Activated CD4-positive, alpha-beta T cell treated with anti-CD3 and anti-CD28 coated beads, Interleukin-2, amount 10 ng/mL, durations not matched to agents 24 days and 14 days (primary cell): ENCODE measurements at regions of chr12 and their contacts with region 1.

Region 1: DNA sequence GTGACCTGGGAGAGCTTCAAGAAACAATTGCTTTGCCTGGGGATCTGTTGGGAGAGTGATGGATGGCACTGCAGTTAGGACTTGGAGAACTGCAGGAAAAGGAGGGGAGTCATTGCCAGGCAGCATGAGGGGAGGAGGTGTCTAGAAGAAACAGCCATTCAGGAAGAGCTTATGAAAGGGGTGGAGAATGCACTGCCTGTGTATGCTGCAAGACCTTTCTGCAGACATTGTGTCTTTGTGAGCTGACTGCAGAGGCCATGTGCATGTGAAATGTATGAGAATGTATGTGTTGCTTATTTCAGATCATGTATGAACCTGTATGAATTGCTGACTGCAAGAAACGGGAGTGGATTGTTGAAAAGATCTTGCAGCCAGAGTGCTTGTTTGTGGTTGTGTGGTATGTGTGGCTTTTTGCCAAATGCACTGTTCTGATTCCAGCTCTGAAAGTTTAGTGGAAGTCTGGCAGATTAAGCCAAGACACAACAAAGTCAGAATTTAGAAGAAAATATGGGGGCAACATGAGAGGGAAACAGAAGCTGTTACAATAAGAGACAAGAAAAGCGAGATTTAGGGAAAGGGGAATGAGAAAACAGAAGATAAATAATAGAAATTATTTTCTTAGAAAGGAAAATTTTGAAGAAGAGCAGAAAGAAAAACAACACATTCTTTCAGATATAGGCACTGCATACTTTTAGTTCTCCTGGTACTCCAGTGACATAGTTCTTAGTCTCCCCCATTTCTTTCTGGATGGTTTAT is 9.8 kb upstream of the RIMKLB start:
- DNase-seq: no peak
- H3K4me3 Mint-ChIP-seq: no peak overlapping the region
- H3K27ac Mint-ChIP-seq: no peak overlapping the region
- H3K4me1 Mint-ChIP-seq: no peaks in the 10 kb centered on the region
- H3K27me3 Mint-ChIP-seq: peaks cover 34% of the 10 kb centered on the region

Region 2: DNA sequence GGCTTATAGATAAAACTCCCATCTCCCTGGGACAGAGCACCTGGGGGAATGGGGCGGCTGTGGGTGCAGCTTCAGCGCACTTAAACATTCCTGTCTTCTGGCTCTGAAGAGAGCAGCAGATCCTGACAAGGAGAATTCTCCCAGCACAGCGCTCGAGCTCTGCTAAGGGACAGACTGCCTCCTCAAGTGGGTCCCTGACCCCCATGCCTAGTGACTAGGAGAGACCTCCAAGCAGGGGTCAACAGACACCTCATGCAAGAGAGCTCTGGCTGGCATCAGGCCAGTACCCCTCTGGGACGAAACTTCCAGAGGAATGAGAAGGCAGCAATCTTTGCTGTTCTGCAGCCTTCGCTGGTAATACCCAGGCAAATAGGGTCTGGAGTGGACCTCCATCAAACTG is 1216.0 kb before region 1 on chr12:
- intact Hi-C with region 1: no loop called
- DNase-seq: no peak
- H3K4me3 Mint-ChIP-seq: no peak overlapping the region
- H3K27ac Mint-ChIP-seq: no peak overlapping the region
- H3K4me1 Mint-ChIP-seq: no peaks in the 10 kb centered on the region
- H3K27me3 Mint-ChIP-seq: peaks cover 10% of the 10 kb centered on the region

Region 3: GRCh38 chr12:8722286-8722685 is 34.3 kb after region 1 on chr12:
- intact Hi-C with region 1: no loop called
- DNase-seq: no peak
- H3K4me3 Mint-ChIP-seq: no peak overlapping the region
- H3K27ac Mint-ChIP-seq: no peak overlapping the region
- H3K4me1 Mint-ChIP-seq: no peaks in the 10 kb centered on the region
- H3K27me3 Mint-ChIP-seq: no peaks in the 10 kb centered on the region

Region 4: GRCh38 chr12:8813572-8814357 is 125.7 kb after region 1 on chr12:
- intact Hi-C with region 1: no loop called
- DNase-seq: no peak
- H3K4me3 Mint-ChIP-seq: no peak overlapping the region
- H3K27ac Mint-ChIP-seq: no peak overlapping the region
- H3K4me1 Mint-ChIP-seq: no peaks in the 10 kb centered on the region
- H3K27me3 Mint-ChIP-seq: no peaks in the 10 kb centered on the region

Region 5: DNA sequence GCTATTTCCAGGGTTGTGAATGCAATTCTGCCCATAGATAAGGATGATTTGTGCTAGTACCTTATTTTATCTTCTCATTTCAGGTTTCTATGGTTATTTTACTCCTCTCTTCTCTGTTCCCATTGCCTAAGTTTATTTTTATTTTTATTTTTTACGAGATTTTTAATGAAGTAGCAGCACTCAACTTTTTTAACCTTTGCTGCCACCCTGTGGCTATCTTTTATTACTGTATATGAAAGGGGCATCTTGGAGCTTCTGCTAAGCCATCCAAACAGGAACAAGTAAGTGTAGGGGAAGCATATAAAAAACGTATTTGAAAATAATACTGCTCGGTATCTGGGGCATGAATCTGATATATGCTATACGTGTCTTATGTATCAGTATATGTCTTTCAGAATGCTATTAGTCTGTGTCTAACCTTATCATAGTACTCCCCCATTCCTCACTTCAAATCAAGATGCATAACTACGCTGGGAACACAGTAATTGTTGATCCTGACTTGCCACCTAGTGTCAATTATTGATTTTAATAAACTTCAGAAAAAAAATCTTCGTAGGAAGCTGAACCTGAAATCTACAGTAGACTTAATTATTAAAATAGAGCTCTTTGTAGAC is 361.6 kb after region 1 on chr12:
- intact Hi-C with region 1: loop called (anchors 2 kb)
- DNase-seq: peak; percentile 78
- H3K4me3 Mint-ChIP-seq: no peak overlapping the region
- H3K27ac Mint-ChIP-seq: no peak overlapping the region
- H3K4me1 Mint-ChIP-seq: peaks cover 1% of the 10 kb centered on the region
- H3K27me3 Mint-ChIP-seq: peaks cover 6% of the 10 kb centered on the region